Activated CD4-positive, alpha-beta T cell treated with anti-CD3 and anti-CD28 coated beads for 36 hours (primary cell): ENCODE measurements at regions of chr1 and their contacts with region 1.

Region 1: DNA sequence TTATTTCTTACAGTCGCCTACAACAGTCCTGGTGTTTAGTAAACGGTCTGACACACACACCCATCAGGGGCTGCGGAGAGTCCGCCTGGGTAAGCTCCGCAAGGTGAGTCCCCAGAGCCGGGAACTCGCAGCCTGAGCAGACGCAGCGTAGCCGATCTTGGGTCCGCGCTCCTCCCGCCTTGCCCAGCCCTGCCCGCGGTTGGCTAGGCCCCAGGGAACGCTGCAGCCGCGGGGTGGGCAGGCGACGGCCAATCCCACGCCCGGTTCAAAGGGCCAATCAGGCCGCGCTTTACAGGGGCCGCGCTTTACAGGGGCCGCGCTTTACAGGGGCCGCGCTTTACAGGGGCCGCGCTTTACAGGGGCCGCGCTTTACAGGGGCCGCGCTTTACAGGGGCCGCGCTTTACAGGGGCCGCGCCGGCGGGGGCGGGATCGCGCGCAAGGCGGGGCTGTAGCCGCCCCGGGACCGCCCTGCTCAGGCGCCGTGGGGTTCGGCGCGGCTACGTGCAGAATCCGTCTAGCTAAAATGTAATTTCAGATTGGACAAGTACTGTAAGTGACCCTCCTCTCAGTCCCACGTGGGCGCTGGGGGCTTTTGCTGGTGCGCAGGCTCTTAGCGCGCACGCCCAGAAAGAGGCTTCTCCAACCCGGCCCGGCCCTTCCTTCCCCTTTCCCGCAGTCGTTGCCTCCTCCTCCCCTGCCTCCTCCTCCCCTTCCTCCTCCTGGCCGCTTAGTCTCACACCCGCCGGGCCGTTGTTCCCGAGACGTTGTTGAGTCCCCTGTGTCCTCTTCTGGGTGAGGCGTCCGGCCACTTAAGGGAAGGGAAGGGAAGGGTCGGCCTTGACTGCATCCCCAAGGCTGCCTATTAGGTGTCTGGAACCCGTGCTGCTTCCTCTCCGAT is at the start of gene FGGY:
- DNase-seq: peak; percentile 91
- ATAC-seq: peak; percentile 94
- H3K4me3 Mint-ChIP-seq: peak within 1 kb of the TSS; percentile 88
- H3K27ac Mint-ChIP-seq: peak within 1 kb of the TSS; percentile 73
- H3K4me1 Mint-ChIP-seq: peaks cover 20% of the 10 kb centered on the region
- H3K27me3 Mint-ChIP-seq: no peaks in the 10 kb centered on the region
- total RNA-seq, gene FGGY: 5.6 to 8.1 TPM

Region 2: DNA sequence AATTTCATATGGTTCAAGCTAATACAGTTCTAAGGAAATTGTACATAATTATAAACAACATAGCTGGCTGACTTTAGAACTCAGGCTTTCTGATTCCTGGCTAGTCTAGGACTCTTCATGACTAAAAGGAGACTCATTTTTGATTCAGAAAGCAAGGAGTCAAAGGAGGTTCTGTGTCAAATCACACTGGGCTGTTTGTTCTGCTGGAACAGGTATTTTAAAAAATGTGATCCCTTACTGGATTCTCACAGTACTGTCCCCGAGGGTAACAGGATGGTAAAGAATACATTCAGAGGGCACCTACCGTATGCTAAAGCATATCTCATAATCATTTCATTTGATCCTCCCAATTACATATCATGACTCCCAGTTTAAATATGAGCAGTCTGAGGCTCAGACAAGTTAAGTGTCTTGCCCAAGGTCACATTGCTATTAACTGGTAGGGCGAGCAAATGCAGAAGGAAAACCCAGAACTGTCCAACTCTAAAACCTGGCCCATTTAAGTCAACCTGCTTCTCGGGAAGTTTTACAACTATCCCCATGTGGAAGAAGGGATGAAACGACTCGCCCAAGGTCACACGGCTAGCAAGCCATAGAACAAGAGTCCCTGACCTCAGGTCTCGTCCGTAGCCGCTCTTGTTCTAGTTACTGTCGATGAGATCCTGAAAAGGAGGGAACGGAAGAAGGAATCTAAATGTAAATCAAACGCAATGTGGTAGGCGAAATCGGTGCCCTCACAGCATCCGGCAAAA is 597.4 kb before region 1 on chr1:
- CTCF ChIA-PET with region 1: no interaction called
- POLR2A ChIA-PET with region 1: no interaction called
- intact Hi-C with region 1: loop called in 1 of 2 experiments (anchors 1 kb)
- DNase-seq: no peak
- ATAC-seq: peak; percentile 16
- H3K4me3 Mint-ChIP-seq: peak overlapping the region; percentile 85
- H3K27ac Mint-ChIP-seq: peak overlapping the region; percentile 94
- H3K4me1 Mint-ChIP-seq: peaks cover 11% of the 10 kb centered on the region
- H3K27me3 Mint-ChIP-seq: no peaks in the 10 kb centered on the region

Region 3: DNA sequence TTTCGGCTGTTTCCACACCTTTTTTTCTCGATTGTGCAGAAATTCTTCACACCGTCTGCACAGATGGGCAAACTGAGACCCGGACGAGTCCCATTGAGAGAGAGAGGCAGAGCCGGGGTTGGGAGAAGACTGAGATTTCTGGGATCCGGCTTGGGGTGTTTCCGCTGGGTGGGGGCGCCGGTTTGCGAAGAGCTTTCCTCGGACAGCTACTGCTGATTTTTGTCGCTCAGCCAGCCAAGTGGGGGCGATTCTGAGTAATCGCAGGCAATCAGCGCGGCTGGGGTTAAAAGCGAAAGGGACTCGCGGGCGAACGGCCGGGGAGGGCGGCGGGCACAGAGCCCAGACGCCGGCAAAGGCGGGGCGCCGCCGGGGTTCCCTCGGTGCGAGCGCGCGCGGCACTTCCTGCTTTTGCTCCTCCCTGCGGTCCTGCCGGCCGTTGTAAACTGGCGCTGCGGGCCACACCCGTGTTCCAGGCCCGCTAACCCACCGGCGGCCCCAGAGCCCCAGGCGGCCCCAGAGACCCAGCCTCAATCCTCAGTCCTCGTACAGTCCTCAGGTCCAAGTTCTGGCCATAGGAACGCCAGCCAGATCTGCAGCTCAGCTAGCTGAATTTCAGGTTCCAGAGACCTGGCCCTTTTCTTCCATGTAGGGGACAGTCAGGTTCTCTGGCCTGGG is 480.4 kb before region 1 on chr1:
- CTCF ChIA-PET with region 1: no interaction called
- POLR2A ChIA-PET with region 1: no interaction called
- intact Hi-C with region 1: loop called in 1 of 2 experiments (anchors 1 kb)
- DNase-seq: peak; percentile 92
- ATAC-seq: peak; percentile 92
- H3K4me3 Mint-ChIP-seq: peak overlapping the region; percentile 77
- H3K27ac Mint-ChIP-seq: peak overlapping the region; percentile 79
- H3K4me1 Mint-ChIP-seq: peaks cover 39% of the 10 kb centered on the region
- H3K27me3 Mint-ChIP-seq: no peaks in the 10 kb centered on the region

Region 4: GRCh38 chr1:59020151-59020997 is 276.2 kb before region 1 on chr1:
- CTCF ChIA-PET with region 1: no interaction called
- POLR2A ChIA-PET with region 1: no interaction called
- intact Hi-C with region 1: loop called in 1 of 2 experiments (anchors 10 kb)
- DNase-seq: peak; percentile 70
- ATAC-seq: peak; percentile 96
- H3K4me3 Mint-ChIP-seq: peak overlapping the region; percentile 60
- H3K27ac Mint-ChIP-seq: peak overlapping the region; percentile 88
- H3K4me1 Mint-ChIP-seq: peaks cover 26% of the 10 kb centered on the region
- H3K27me3 Mint-ChIP-seq: no peaks in the 10 kb centered on the region

Region 5: DNA sequence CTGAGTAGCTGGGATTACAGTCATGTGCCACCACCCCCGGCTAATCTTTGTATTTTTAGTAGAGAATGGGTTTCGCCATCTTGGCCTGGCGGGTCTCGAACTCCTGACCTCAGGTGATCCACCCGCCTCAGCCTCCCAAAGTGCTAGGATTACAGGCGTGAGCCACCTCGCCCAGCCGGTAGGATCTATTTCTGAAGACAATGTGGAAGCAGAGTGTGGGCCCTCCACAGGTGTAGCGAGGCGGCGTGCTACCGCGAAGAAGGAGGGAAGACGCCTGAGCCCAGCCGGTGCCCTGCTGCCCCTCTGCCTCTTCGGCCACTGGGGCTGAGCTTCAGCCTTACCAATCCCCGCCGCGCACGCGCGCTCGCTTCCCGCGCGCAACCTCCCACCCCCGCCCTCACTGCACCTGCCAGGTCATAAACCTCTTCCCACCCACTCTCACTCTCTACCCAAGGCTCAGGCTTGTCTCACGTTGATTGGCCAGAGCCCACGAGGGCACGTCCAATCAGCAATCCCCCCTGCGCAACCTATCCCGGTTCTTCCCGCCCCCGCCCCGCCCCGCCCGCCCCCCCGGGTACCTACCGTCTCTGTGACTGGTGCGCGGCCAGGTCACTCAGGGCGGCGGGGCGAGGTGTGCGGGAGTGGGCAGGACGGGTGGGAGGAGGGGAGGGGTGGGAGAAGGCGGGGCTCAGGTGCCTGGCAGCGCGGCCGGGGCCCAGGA is 517.7 kb after region 1 on chr1:
- CTCF ChIA-PET with region 1: no interaction called
- POLR2A ChIA-PET with region 1: no interaction called
- intact Hi-C with region 1: loop called in 1 of 2 experiments (anchors 1 kb)
- DNase-seq: peak; percentile 92
- ATAC-seq: peak; percentile 96
- H3K4me3 Mint-ChIP-seq: no peak overlapping the region
- H3K27ac Mint-ChIP-seq: peak overlapping the region; percentile 73
- H3K4me1 Mint-ChIP-seq: peaks cover 8% of the 10 kb centered on the region
- H3K27me3 Mint-ChIP-seq: peaks cover 5% of the 10 kb centered on the region